ENCODE measurements at regions of chrX and their contacts with region 1.

Region 1: DNA sequence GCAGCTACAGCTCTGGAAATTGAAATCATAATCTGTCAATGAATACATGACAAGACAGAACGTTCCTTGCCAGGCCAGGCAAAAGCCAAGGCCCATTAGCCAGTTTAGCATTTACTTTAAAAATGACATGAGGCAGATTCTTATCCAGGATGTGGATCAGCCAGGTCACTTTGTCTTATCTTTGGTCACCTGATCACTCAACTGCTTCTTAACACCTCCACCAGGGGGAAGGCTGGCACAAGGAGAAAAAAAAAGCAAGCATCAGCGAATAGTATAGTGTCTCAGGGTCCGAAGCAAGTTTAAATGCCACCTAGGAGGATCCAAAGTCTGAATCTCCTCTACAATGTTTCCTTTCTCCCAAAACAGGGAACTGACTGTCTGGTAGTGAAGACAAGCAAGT is 18.8 kb downstream of the ATP1B4 start:
- DNase-seq: peak; percentile 41
- ATAC-seq: peak; percentile 50
- H3K4me3 ChIP-seq: no peak overlapping the region
- H3K27ac ChIP-seq: no peak overlapping the region
- H3K4me1 ChIP-seq: no peaks in the 10 kb centered on the region
- H3K27me3 ChIP-seq: no peaks in the 10 kb centered on the region
- CTCF ChIP-seq: peak; percentile 62

Region 2: DNA sequence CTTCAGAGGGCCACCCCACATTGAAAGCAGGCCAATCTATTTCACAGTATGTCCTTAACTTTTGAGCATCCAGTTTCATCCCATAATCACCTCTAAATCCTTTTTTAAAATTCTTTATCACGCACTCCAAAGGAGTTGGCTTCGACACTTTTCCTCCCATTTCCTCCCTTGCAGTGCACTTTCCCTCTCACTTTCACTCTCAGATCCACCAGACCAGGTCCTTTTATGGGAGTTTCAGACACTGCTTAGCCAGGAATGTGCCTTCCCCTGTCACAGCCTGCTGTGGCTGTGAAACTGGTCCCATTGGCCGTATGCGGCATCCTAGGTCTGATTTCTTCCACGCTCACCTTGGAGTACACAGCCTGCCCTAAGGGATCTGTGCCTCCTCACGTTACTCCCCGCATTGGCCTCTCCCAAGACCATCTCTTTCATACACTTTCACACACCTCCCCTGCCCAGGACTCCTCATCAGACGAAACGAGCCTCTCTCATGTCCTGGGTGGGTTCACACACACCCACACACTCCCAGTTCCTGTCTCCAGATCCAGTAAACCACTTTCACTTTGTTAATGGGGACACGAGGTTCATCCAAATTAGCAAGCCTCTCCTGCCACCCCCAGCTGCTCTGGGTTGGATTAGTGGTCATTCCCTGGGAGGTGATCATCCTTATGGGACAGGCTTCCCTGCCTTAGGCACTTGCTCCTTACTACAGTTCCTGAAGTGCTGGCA is 293.2 kb before region 1 on chrX:
- CTCF ChIA-PET with region 1: no interaction called
- POLR2A ChIA-PET with region 1: no interaction called
- intact Hi-C with region 1: no loop called
- DNase-seq: no peak
- ATAC-seq: no peak
- H3K4me3 ChIP-seq: peak overlapping the region; percentile 49; the same call in 1 of the 2 replicates
- H3K27ac ChIP-seq: no peak overlapping the region
- H3K4me1 ChIP-seq: no peaks in the 10 kb centered on the region
- H3K27me3 ChIP-seq: no peaks in the 10 kb centered on the region
- CTCF ChIP-seq: no peak

Region 3: DNA sequence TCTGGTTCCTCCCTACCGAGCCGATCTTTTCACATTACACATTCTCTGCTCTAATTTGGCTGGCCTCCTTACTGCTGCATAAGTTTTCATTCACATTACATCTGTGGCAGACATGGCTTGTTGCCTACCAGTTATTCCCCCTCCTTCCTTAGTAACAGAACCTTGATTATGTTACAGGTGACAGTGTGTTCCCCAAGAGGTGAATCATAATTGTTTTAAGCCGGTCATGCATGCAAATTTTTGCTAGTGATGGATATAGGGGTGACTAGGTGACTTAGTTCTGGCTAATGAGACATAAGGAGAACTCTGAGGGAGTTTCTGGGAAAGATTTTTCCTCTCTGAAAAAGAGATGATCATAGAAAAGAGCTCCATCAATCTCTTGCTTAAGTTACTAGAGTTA is 96.8 kb after region 1 on chrX:
- CTCF ChIA-PET with region 1: interaction called, 6 read pairs
- POLR2A ChIA-PET with region 1: no interaction called
- intact Hi-C with region 1: loop called (anchors 1 kb)
- DNase-seq: no peak
- ATAC-seq: no peak
- H3K4me3 ChIP-seq: no peak overlapping the region
- H3K27ac ChIP-seq: no peak overlapping the region
- H3K4me1 ChIP-seq: no peaks in the 10 kb centered on the region
- H3K27me3 ChIP-seq: no peaks in the 10 kb centered on the region
- CTCF ChIP-seq: no peak

Measured in PC-3 (cell line).